AG04449 (cell line): ENCODE measurements at regions of chr9 and their contacts with region 1.

Region 1: GRCh38 chr9:34343090-34343489 is 13.7 kb downstream of the NUDT2 start:
- DNase-seq: no peak
- H3K4me3 ChIP-seq: no peak overlapping the region
- CTCF ChIP-seq: no peak

Region 2: DNA sequence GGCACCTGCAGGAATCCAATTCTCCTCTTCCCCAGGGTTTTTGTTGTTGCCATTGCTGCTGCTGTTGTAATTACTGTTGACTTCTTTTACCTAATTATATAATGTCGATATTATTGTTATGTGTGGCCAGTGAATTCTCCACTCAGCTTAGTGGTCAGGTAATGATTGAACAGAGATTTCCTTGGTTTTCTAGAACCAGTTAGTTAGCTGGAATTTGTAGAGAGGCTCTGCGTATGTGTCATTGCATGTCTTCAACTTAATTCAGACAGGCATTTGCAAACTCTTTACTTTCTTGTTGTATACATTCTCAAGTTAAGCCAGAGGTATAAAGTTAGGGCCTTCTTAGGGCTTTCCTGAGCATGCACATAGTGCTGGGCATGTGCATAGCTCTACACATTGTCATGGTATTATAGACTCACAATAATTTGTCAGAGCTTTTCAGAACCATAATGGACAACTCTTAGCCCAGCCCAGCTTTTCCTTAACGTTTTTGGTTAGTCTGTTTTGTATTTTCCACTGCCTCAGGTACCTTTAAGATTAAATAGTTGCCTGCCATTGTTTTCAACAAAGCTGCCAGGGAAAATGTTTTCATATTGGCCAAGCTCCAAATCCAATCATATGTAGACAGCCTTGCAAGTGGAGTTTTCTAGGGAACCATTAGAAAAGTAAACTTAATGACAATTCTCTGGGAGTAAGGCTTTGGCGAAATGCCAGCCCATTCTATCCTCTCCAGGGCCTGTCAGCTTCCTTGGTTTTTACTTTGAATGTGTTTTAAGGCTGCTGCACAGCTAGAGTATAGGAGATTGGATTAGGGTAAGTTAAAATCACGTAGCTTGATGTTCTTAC is 458.0 kb before region 1 on chr9:
- CTCF ChIA-PET with region 1: no interaction called
- POLR2A ChIA-PET with region 1: no interaction called
- DNase-seq: no peak
- H3K4me3 ChIP-seq: no peak overlapping the region
- CTCF ChIP-seq: no peak

Region 3: DNA sequence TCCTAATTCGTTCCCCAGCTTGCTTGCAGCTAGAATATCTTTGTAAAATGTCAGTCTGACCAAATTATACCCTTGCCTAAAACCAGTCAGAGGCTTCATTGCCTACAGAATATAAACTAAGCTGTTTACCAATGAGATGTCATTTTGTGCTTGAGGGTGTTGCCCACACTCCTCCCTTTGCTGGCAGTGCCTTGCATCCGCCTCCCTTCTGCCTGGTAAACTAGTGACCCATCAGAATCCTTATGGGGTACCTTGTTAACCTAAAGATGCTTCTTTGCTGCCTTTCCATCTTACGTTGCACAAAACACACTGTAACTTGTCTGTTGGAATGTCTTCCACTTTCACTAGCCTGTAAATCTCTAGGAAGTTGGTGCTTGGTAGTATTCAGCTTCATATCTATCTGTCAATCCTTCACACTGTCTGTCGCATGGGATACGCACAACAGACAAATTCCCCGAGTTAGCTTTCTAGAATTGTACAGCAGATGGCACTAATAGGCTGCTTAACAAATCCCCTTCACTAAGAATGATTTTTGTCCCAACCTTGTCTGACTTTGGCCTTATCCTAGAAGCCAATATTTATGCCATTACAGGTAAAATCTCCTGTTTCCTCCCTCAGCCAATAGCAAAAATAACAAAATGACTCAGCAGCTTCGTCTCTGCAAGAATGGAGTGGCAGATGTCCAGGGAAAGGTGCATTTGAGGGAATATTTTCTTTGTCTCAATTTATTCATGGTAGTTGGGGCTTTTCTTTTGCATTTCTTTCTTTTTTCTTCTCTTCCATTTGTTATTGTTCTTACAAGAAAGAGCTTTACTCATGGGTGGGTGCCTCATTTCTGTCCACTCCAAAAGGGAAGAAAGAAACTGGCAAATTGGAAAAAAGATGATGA is 10.8 kb before region 1 on chr9:
- CTCF ChIA-PET with region 1: interaction called, 49 read pairs
- POLR2A ChIA-PET with region 1: no interaction called
- DNase-seq: no peak
- H3K4me3 ChIP-seq: no peak overlapping the region
- CTCF ChIP-seq: peak; percentile 35

Region 4: DNA sequence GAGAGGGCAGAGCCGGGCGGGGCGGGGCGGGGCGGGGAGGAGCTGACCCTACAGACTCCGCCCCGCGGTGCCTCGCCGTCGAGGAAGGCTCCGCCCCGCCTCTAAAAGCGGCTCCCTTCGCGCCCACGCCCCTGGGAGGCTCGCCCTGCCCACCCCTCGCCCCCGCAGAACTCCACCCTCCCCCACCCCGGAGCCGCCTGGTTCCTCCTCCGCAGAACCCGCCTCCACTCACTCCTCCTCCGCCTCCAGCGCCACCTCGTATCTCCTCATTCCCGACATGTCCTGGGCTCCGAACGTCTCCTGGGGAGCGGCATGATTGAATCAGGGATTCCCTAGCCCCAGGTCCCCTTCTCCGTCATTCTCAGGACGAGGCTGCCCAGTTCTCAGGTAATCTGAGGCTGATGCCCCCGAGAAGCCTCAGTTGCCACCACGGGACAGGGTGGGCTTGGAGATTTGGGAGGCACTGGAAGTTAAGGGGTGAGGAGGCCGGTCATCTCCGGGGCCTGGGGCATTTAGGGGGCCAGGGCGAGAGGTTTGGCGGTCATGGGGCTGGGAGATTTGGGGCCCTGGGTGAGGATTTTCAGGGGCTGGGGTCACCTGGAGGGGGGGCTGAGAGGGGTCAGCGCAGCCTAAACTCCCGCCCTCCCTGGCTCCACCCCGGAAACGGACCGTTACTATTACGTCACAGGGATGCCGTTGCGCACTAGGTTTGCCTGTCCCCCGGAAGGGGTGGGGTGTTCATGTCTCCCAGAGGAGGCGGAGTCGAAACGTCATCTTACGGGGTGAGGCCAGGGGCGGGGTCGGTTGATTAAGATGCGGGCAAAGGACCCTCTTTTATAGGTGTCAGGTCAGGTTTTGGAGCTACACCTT is 322.5 kb after region 1 on chr9:
- CTCF ChIA-PET with region 1: no interaction called
- POLR2A ChIA-PET with region 1: no interaction called
- DNase-seq: peak; percentile 65
- H3K4me3 ChIP-seq: peak overlapping the region; percentile 92
- CTCF ChIP-seq: no peak